Motor neuron (in vitro differentiated cells): ENCODE measurements at regions of chr9 and their contacts with region 1.

Region 1: DNA sequence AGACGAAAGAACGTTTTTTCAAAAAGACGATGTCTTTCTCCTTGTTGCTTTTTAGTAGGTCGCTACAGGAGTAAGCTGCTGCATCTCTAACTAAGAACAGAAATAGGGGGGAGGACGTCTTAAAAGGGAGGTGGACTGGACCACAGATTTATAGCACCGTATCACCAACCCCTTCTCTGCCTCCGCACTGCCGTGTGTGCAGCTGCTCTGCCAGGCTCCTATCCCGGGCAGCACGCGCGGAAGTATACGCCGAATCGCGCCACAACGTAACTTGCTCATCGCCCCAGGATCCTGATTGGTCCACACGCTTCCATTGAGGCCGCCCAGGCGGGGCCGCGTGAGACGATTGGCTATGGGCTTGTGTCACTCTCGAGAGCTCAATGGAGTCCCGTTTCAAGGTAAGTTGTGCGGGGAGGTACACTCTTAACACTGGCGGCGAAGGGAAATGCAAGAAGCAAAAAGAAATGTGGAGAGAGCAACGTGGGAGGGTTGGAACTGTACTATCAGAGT is at the start of gene ELAVL2:
- ATAC-seq: peak; percentile 86 to 97 (median 88)
- H3K4me3 ChIP-seq: peak within 1 kb of the TSS; percentile 45 to 86 (median 47)
- H3K27ac ChIP-seq: peak within 1 kb of the TSS; percentile 56 to 70
- H3K4me1 ChIP-seq: peaks cover 0 to 28% of the 10 kb centered on the region in 2 donors
- total RNA-seq, gene ELAVL2: 0.15 to 368 (median 179) TPM

Region 2: GRCh38 chr9:24614070-24614469 is 787.9 kb after region 1 on chr9:
- in situ Hi-C with region 1: loop called in 1 of 9 experiments (anchors 25 kb)
- ATAC-seq: peak in 1 of 8 experiments; percentile 52
- H3K4me3 ChIP-seq: no peak overlapping the region
- H3K27ac ChIP-seq: no peak overlapping the region
- H3K4me1 ChIP-seq: peaks cover 9 to 34% of the 10 kb centered on the region in 2 donors